GM12878 (cell line): ENCODE measurements at regions of chr18 and their contacts with region 1.

Region 1: DNA sequence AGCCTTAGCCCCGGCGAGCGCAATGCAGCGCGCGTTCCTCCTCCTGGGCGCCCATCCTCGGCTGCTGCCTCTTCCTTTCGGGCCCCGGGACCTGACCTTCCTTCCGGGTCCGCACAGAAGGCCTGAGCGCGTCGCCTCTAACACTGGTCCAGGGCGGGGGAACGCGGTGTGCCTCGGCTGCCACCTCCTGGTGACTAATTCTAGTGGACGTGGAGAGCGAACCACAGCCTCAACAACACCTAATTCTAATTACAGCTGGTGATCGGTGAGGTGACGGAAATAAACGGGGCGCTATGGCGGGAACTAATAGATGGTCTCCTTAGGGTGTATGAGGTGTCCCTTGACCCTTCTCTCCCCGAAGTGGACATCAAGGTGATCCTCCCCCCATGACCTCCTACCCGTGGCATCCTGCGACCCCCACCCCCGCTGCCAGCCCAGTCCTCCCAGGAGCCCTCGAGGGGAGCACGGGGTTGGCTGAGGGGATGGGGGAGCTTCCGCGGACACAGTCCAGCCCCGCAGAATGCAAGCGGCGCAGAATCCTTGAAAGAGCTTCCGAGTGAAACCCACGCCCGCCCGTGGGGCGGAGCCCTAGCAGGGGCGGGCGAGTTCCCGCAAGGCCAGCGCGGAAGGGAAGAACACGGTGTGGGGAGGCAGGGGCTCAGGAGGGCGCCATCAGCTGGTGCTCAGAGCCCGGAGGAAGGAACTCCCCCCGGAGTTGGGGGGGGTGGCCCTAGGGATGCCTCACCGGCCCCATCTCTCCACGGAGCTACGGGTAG is 12.8 kb upstream of the HMSD start:
- DNase-seq: peak; percentile 67
- ATAC-seq: peak; percentile 98
- H3K4me3 ChIP-seq: peak overlapping the region; percentile 73
- H3K27ac ChIP-seq: peak overlapping the region; percentile 22; the same call in 1 of the 2 replicates
- H3K4me1 ChIP-seq: peaks cover 9% of the 10 kb centered on the region
- H3K27me3 ChIP-seq: no peaks in the 10 kb centered on the region
- CTCF ChIP-seq: peak; percentile 80 to 91 (median 83)
- EP300 ChIP-seq: no peak
- POLR2A ChIP-seq: peak; percentile 78
- RAD21 ChIP-seq: peak; percentile 94

Region 2: GRCh38 chr18:63518178-63519012 is 417.9 kb before region 1 on chr18:
- CTCF ChIA-PET with region 1: interaction called, 25 read pairs
- POLR2A ChIA-PET with region 1: interaction called, 3 read pairs
- RAD21 ChIA-PET with region 1: interaction called, 10 read pairs
- SMC1A ChIA-PET with region 1: interaction called, 10 read pairs
- in situ Hi-C with region 1: no loop called
- intact Hi-C with region 1: loop called (anchors 1 kb)
- DNase-seq: peak; percentile 16
- ATAC-seq: peak; percentile 98
- H3K4me3 ChIP-seq: no peak overlapping the region
- H3K27ac ChIP-seq: no peak overlapping the region
- H3K4me1 ChIP-seq: no peaks in the 10 kb centered on the region
- H3K27me3 ChIP-seq: no peaks in the 10 kb centered on the region; a peak in 1 of 4 replicates
- CTCF ChIP-seq: peak; percentile 58 to 65 (median 63)
- EP300 ChIP-seq: no peak
- POLR2A ChIP-seq: no peak
- RAD21 ChIP-seq: peak; percentile 93

Region 3: GRCh38 chr18:63848159-63848558 is 88.2 kb before region 1 on chr18:
- CTCF ChIA-PET with region 1: interaction called, 20 read pairs
- POLR2A ChIA-PET with region 1: no interaction called
- RAD21 ChIA-PET with region 1: interaction called, 7 read pairs
- SMC1A ChIA-PET with region 1: interaction called, 9 read pairs
- in situ Hi-C with region 1: no loop called
- intact Hi-C with region 1: loop called (anchors 1 kb)
- DNase-seq: no peak
- ATAC-seq: peak; percentile 71
- H3K4me3 ChIP-seq: no peak overlapping the region
- H3K27ac ChIP-seq: no peak overlapping the region
- H3K4me1 ChIP-seq: no peaks in the 10 kb centered on the region
- H3K27me3 ChIP-seq: peaks cover 0 to 4% of the 10 kb centered on the region in 2 experiments; a peak in 2 of 4 replicates
- CTCF ChIP-seq: peak; percentile 54 to 64 (median 57); a peak in 5 of 6 replicates
- EP300 ChIP-seq: no peak
- POLR2A ChIP-seq: no peak
- RAD21 ChIP-seq: peak; percentile 73

Region 4: GRCh38 chr18:63890950-63891304 is 45.4 kb before region 1 on chr18:
- CTCF ChIA-PET with region 1: interaction called, 185 read pairs
- POLR2A ChIA-PET with region 1: interaction called, 5 read pairs
- RAD21 ChIA-PET with region 1: interaction called, 52 read pairs
- SMC1A ChIA-PET with region 1: interaction called, 105 read pairs
- in situ Hi-C with region 1: loop called (anchors 5 kb)
- intact Hi-C with region 1: loop called (anchors 1 kb)
- DNase-seq: no peak
- ATAC-seq: peak; percentile 80
- H3K4me3 ChIP-seq: no peak overlapping the region
- H3K27ac ChIP-seq: no peak overlapping the region
- H3K4me1 ChIP-seq: no peaks in the 10 kb centered on the region
- H3K27me3 ChIP-seq: no peaks in the 10 kb centered on the region
- CTCF ChIP-seq: peak; percentile 39 to 74 (median 50); a peak in 4 of 6 replicates
- EP300 ChIP-seq: no peak
- POLR2A ChIP-seq: no peak
- RAD21 ChIP-seq: peak; percentile 95

Region 5: DNA sequence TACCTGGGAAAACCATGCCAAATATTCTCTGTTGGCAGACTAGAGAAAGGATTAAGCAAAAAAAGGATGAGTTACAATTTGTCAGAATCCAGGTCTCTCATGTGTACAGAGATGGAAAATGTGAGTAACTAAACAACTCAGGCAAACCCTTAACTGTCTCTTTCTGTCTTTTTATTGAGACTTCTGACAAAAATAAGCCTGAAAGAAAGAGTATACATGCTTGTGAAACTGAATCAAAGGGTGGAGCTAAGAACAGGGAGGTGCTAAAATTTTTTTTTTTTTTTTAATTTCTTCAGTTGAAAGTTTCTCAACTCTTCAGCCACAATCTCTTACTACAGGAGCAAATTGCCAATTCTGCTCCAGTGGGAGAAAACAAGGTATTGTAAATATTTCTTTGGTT is 28.7 kb before region 1 on chr18 and contains the start of gene SERPINB10:
- CTCF ChIA-PET with region 1: interaction called, 52 read pairs
- POLR2A ChIA-PET with region 1: interaction called, 15 read pairs
- RAD21 ChIA-PET with region 1: interaction called, 69 read pairs
- SMC1A ChIA-PET with region 1: interaction called, 99 read pairs
- in situ Hi-C with region 1: no loop called
- intact Hi-C with region 1: no loop called
- DNase-seq: no peak
- ATAC-seq: peak; percentile 57
- H3K4me3 ChIP-seq: 0 out of 2 replicates have a peak within 1 kb of the TSS, but pooled peaks have one; percentile 4
- H3K27ac ChIP-seq: peak within 1 kb of the TSS; percentile 63; the same call in 1 of the 2 replicates
- H3K4me1 ChIP-seq: peaks cover 4% of the 10 kb centered on the region; the same call in 1 of the 2 replicates
- H3K27me3 ChIP-seq: no peaks in the 10 kb centered on the region
- CTCF ChIP-seq: no peak
- EP300 ChIP-seq: no peak
- POLR2A ChIP-seq: no peak
- RAD21 ChIP-seq: no peak
- polyA plus RNA-seq, gene SERPINB10: 20.7 to 23.1 TPM

Region 6: DNA sequence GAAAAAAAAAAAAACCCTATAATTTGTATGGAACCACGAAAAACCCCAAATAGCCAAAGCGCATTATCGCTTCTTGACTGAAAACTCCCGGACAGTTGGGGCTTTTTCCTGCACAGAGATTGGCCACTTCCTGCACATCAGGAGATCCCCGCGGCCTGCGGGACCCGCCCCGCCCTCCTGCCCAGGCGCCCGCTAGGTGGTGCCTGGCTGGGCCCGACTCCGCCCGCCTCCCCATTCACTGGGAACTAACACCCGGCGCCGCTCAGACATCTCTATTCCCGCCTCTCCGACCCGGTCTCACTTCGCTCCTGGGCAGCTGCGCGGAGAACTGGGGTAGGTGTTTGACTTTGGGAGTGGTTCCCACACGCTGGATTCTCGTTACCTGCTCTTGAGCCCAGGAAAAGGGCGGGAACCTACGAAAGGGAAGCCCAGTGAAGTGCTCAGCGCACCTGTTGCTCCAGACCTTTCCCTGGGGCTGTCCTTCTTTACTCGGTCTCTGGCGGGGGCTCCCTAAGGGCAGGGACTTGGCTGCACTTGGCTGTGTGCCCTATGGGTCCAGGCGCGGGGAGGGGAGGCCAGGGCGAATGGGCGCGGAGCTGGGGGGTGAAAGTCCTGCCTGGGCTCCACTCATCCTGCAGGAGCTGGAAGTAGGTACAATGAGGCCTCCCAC is 12.9 kb after region 1 on chr18 and contains the start of gene HMSD:
- CTCF ChIA-PET with region 1: interaction called, 70 read pairs
- POLR2A ChIA-PET with region 1: interaction called, 3 read pairs
- RAD21 ChIA-PET with region 1: interaction called, 12 read pairs
- SMC1A ChIA-PET with region 1: interaction called, 22 read pairs
- in situ Hi-C with region 1: no loop called
- intact Hi-C with region 1: no loop called
- DNase-seq: peak; percentile 57
- ATAC-seq: peak; percentile 93
- H3K4me3 ChIP-seq: peak within 1 kb of the TSS; percentile 89
- H3K27ac ChIP-seq: peak within 1 kb of the TSS; percentile 97
- H3K4me1 ChIP-seq: peaks cover 9% of the 10 kb centered on the region
- H3K27me3 ChIP-seq: no peaks in the 10 kb centered on the region
- CTCF ChIP-seq: peak; percentile 49 to 60 (median 54)
- EP300 ChIP-seq: no peak; a peak in 1 of 4 replicates
- POLR2A ChIP-seq: peak; percentile 76
- RAD21 ChIP-seq: no peak
- polyA plus RNA-seq, gene HMSD: 31.5 to 33.4 TPM

Region 7: GRCh38 chr18:63979409-63979920 is 43.1 kb after region 1 on chr18:
- CTCF ChIA-PET with region 1: interaction called, 60 read pairs
- POLR2A ChIA-PET with region 1: interaction called, 3 read pairs
- RAD21 ChIA-PET with region 1: interaction called, 21 read pairs
- SMC1A ChIA-PET with region 1: interaction called, 47 read pairs
- in situ Hi-C with region 1: no loop called
- intact Hi-C with region 1: loop called (anchors 1 kb)
- DNase-seq: no peak
- ATAC-seq: peak; percentile 67
- H3K4me3 ChIP-seq: no peak overlapping the region
- H3K27ac ChIP-seq: no peak overlapping the region
- H3K4me1 ChIP-seq: peaks cover 6% of the 10 kb centered on the region
- H3K27me3 ChIP-seq: no peaks in the 10 kb centered on the region
- CTCF ChIP-seq: peak; percentile 85 to 96 (median 89)
- EP300 ChIP-seq: no peak
- POLR2A ChIP-seq: no peak
- RAD21 ChIP-seq: peak; percentile 72